Cardiac septum (tissue), 1 donor: ENCODE measurements at regions of chr5 and their contacts with region 1.

Region 1: GRCh38 chr5:151051066-151051930 is 29.5 kb downstream of the TNIP1 start:
- DNase-seq: peak; percentile 88

Region 2: GRCh38 chr5:151002250-151002649 is 49.0 kb before region 1 on chr5:
- intact Hi-C with region 1: loop called (anchors 2 kb)
- DNase-seq: no peak

Region 3: GRCh38 chr5:151115274-151115905 is 64.1 kb after region 1 on chr5:
- intact Hi-C with region 1: loop called (anchors 1 kb)
- DNase-seq: peak; percentile 92